ENCODE measurements at regions of chr4 and their contacts with region 1.

Region 1: GRCh38 chr4:27010334-27010940 is 149.8 kb downstream of the STIM2 start:
- DNase-seq: peak; percentile 78
- H3K4me3 ChIP-seq: no peak overlapping the region
- H3K27ac ChIP-seq: peak overlapping the region; percentile 44
- H3K4me1 ChIP-seq: peaks cover 74% of the 10 kb centered on the region
- CTCF ChIP-seq: peak; percentile 94

Region 2: DNA sequence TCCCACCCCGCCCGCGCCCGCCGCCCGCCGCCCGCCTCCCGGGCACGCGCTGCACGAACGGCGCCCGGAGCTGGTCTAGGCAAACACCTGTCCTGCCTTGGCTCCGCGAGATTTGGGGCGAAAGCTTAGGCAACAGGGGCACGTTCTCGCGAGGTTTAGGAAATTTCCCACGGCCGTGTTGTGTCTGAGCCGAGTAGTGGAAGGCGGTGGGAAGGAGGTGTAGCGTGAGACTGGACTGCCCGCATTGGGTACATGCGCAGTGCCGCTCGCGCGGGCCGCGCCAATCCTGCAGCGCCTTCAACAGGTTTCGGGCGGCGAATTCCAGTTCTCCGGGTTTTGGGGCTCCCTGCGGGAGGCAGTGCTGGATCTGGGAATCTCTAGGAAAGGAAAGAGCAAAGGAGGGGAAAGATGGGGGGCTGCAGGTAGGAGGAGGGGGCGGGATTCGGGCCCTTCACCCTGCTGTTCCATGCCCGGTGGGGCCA is 690.9 kb before region 1 on chr4:
- CTCF ChIA-PET with region 1: no interaction called
- POLR2A ChIA-PET with region 1: no interaction called
- intact Hi-C with region 1: loop called (anchors 10 kb)
- DNase-seq: peak; percentile 99
- H3K4me3 ChIP-seq: peak overlapping the region; percentile 96
- H3K27ac ChIP-seq: peak overlapping the region; percentile 82
- H3K4me1 ChIP-seq: peaks cover 15% of the 10 kb centered on the region
- CTCF ChIP-seq: 0 out of 2 replicates have a peak, but pooled peaks have one; percentile 28

Region 3: GRCh38 chr4:26473893-26474292 is 536.5 kb before region 1 on chr4:
- CTCF ChIA-PET with region 1: no interaction called
- POLR2A ChIA-PET with region 1: no interaction called
- intact Hi-C with region 1: loop called (anchors 5 kb)
- DNase-seq: peak; percentile 41
- H3K4me3 ChIP-seq: no peak overlapping the region
- H3K27ac ChIP-seq: no peak overlapping the region
- H3K4me1 ChIP-seq: no peaks in the 10 kb centered on the region
- CTCF ChIP-seq: peak; percentile 70

Region 4: DNA sequence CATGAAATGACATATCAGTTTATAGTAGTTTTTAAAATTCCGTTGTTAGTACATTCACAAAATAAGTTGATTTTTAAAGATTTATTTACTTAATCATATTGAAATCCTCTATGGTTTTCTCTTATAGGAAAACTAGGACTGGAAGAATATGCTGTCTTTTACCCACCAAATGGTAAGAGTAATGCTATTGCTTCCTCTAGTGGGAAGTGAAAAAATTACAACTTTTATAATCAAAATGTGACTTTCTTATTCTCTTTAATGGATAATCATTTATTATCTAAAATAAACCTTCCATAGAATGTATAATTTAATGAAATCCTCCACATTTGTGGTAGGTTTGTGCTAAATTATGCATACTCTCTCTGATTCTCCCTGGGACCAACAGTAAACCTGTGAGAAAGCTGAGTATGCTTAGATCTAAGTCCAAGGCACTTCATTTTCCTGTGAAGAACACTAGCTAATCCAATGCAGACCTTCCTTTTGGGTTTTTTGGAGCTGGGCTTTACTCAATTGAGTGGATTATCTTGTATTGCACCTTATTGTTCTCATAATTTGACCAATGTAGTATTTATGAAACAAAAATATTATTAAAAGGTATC is 290.4 kb before region 1 on chr4:
- CTCF ChIA-PET with region 1: no interaction called
- POLR2A ChIA-PET with region 1: interaction called, 15 read pairs
- intact Hi-C with region 1: loop called (anchors 2 kb)
- DNase-seq: peak; percentile 49
- H3K4me3 ChIP-seq: no peak overlapping the region
- H3K27ac ChIP-seq: no peak overlapping the region
- H3K4me1 ChIP-seq: peaks cover 36% of the 10 kb centered on the region
- CTCF ChIP-seq: peak; percentile 97

Region 5: DNA sequence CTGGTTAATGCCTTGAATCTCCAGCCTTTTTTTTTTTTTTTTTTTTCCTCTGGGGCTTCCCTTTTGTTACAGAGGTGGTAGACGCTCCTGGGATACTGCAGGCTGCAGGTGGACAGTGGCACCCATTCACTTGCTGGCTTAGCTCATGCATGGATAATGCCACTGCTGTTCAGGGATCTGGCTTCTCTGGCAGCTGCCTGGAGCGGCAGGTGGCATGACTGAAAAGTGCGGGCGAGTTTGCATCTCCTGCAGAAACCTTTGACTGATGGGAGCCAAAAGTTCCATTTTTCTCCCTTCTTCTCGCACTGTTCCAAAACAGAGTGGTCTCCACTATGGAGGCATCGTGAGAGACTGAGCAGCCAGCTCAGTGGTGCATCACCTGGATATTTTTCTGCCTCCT is 155.7 kb before region 1 on chr4:
- CTCF ChIA-PET with region 1: no interaction called
- POLR2A ChIA-PET with region 1: interaction called, 130 read pairs
- intact Hi-C with region 1: no loop called
- DNase-seq: no peak
- H3K4me3 ChIP-seq: no peak overlapping the region
- H3K27ac ChIP-seq: no peak overlapping the region
- H3K4me1 ChIP-seq: peaks cover 28% of the 10 kb centered on the region
- CTCF ChIP-seq: no peak

Region 6: GRCh38 chr4:26992657-26993361 is 17.6 kb before region 1 on chr4:
- CTCF ChIA-PET with region 1: interaction called, 3 read pairs
- POLR2A ChIA-PET with region 1: interaction called, 112 read pairs
- intact Hi-C with region 1: loop called (anchors 1 kb)
- DNase-seq: peak; percentile 89
- H3K4me3 ChIP-seq: peak overlapping the region; percentile 49
- H3K27ac ChIP-seq: peak overlapping the region; percentile 89
- H3K4me1 ChIP-seq: peaks cover 59% of the 10 kb centered on the region
- CTCF ChIP-seq: no peak

Measured in OCI-LY7 (cell line).